ENCODE measurements at regions of chr2 and their contacts with region 1.

Region 1: DNA sequence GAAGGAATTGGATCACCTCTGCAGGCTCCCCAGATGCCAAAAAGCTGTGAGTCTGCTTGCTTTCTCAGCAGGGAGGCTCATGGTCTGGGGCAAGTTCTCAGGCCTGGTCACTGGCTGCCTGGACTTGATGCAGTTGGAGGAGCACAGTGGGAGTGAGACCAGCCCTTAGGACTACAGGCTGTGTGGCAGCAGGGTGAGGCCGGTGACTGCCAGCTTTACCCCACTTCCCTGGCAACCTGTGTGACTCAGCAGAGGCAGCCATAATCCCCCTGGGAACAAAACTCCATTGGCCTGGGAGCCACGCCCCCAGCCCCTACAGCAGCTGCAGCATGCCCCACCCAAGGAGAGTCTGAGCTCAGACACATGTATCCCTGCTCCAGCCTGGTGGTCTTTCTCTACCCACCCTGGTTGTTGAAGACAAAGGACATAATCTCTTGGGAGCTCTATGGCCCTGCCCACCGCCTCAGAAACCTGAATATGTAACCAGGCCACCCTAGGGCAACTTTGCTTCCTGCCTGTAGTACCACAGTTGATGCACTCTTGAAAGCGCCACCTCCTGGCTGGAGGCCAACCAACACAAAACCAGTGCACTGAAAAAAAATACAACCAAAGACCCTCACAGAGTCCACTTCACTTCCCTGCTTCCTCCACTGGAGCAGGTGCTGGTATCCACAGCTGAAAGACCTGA is 106.8 kb upstream of the SPATS2L start:
- DNase-seq: peak; percentile 54
- ATAC-seq: peak; percentile 9
- H3K4me3 Mint-ChIP-seq: peak overlapping the region; percentile 17
- H3K27ac Mint-ChIP-seq: peak overlapping the region; percentile 100
- H3K4me1 Mint-ChIP-seq: peaks cover 64% of the 10 kb centered on the region
- H3K27me3 Mint-ChIP-seq: no peaks in the 10 kb centered on the region
- CTCF ChIP-seq: no peak

Region 2: DNA sequence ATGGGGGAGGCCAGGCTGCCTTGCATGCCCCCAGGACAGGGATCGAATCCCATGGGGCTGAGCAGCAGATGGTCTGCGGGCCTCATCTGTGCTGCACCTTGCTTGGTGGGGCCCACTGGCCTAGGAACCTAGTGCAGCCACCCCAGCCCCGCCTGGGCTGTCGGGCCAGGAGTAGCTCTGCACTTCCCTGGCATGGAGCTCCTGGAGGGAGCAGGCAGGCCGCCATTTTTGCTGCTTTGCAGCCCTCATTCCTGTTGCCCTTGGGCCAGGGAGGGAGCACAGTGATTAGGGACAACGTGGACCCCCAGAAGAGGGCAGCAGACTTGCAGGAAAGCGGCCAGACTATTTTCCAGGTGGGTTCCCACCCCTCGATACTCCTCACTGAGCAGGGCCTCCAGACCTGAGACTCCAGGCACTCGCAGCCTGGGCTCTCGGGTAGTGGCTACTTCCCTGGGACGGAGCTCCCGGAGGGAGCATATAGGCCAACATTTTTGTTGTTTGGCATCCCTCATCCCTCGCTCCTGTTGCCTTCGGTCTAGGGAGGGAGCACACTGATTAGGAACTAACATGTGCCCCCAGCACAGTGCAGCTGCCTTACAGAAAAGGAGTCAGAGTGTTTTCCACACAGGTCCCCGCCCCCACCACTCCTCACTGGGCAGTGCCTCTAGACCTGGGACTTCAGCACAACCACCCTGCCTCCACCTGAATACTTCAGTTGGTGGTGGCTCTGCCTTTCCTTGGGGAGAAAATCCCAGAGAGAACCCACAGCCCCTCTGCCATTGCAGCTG is 144.8 kb before region 1 on chr2:
- CTCF ChIA-PET with region 1: interaction called, 13 read pairs
- POLR2A ChIA-PET with region 1: no interaction called
- DNase-seq: peak; percentile 83
- ATAC-seq: peak; percentile 97
- H3K4me3 Mint-ChIP-seq: no peak overlapping the region
- H3K27ac Mint-ChIP-seq: peak overlapping the region; percentile 50; the same call in 1 of the 2 replicates
- H3K4me1 Mint-ChIP-seq: peaks cover 29% of the 10 kb centered on the region
- H3K27me3 Mint-ChIP-seq: no peaks in the 10 kb centered on the region
- CTCF ChIP-seq: peak; percentile 28; the same call in 1 of the 2 replicates

Measured in WTC11 (cell line).